HCT116 (cell line): ENCODE measurements at regions of chr19 and their contacts with region 1.

Region 1: GRCh38 chr19:40598121-40598917 is 2.9 kb upstream of the LTBP4 start:
- DNase-seq: peak; percentile 86
- ATAC-seq: peak; percentile 57
- H3K4me3 ChIP-seq: peak overlapping the region; percentile 74 to 82
- H3K27ac ChIP-seq: peak overlapping the region; percentile 63
- H3K4me1 ChIP-seq: peaks cover 27 to 73% of the 10 kb centered on the region in 2 experiments
- H3K27me3 ChIP-seq: no peaks in the 10 kb centered on the region
- CTCF ChIP-seq: peak in 2 of 3 experiments; percentile 97; a peak in 4 of 6 replicates
- POLR2A ChIP-seq: peak; percentile 63
- RAD21 ChIP-seq: no peak

Region 2: DNA sequence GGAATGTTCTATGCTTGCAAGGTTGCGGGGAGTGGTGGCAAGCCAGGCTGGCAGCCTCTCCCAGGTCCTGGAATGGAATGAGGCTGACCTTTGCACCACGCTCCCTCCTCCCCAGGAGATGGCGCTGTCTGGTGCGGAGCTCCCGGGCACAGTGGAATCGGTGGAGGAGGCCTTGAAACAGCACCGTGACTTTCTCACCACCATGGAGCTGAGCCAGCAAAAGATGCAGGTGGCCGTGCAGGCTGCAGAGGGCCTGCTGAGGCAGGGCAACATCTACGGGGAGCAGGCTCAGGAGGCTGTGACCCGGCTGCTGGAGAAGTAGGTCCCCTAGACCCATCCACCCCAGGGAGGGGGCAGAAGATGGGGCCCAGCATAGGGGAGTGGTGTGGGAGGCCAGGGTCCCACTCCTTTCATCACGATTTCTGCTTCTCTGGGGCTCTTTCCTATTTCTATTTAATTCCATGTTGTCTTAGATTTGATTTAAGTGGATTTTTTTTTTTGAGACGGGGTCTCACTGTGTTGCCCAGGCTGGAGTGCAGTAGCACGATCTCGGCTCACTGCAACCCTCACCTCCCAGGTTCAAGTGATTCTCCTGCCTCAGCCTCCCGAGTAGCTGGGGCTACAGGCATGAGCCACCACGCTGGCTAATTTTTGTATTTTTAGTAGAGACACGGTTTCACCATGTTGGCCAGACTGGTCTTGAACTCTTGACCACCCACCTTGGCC is 74.8 kb before region 1 on chr19:
- CTCF ChIA-PET with region 1: interaction called, 19 read pairs
- POLR2A ChIA-PET with region 1: no interaction called
- RAD21 ChIA-PET with region 1: no interaction called
- intact Hi-C with region 1: loop called (anchors 5 kb)
- DNase-seq: peak; percentile 72
- ATAC-seq: peak; percentile 95
- H3K4me3 ChIP-seq: peak overlapping the region; percentile 41 to 51
- H3K27ac ChIP-seq: peak overlapping the region; percentile 4; the same call in 1 of the 2 replicates
- H3K4me1 ChIP-seq: peaks cover 6 to 23% of the 10 kb centered on the region in 2 experiments
- H3K27me3 ChIP-seq: no peaks in the 10 kb centered on the region
- CTCF ChIP-seq: peak; percentile 91 to 95 (median 92)
- POLR2A ChIP-seq: no peak
- RAD21 ChIP-seq: peak; percentile 73

Region 3: DNA sequence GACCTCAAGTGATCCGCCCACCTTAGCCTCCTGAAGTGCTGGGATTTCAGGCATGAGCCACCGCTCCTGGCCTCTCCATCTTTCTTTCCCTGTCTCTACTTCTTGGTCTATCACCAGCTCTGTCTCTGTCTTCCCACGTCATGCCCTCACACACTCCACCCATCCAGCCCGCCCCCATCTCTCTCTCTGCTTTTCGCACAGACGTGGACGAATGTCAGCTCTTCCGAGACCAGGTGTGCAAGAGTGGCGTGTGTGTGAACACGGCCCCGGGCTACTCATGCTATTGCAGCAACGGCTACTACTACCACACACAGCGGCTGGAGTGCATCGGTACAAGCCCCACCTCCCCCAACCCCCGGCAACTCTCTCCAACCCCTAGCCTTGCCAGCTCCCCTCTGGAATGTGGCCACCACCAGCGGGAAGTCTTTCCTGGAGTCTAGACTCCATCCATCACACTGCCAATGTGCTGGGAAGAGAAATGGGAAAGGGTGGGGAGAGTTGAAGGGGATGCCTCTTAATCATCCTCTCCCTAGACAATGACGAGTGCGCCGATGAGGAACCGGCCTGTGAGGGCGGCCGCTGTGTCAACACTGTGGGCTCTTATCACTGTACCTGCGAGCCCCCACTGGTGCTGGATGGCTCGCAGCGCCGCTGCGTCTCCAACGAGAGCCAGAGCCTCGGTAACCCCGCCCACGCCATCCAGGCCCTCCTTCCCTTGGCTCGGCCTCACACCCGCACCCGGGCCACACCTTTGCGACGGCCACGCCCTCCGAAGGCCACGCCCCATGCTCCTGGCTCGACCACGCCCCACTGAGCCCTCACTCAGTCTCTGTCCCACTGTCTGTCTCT is 25.3 kb after region 1 on chr19:
- CTCF ChIA-PET with region 1: no interaction called
- POLR2A ChIA-PET with region 1: no interaction called
- RAD21 ChIA-PET with region 1: no interaction called
- intact Hi-C with region 1: no loop called
- DNase-seq: peak; percentile 80
- ATAC-seq: peak; percentile 96
- H3K4me3 ChIP-seq: no peak overlapping the region
- H3K27ac ChIP-seq: peak overlapping the region; percentile 55
- H3K4me1 ChIP-seq: peaks cover 14 to 20% of the 10 kb centered on the region in 2 experiments
- H3K27me3 ChIP-seq: no peaks in the 10 kb centered on the region
- CTCF ChIP-seq: no peak
- POLR2A ChIP-seq: no peak
- RAD21 ChIP-seq: no peak